ENCODE measurements at regions of chr3 and their contacts with region 1.

Region 1: DNA sequence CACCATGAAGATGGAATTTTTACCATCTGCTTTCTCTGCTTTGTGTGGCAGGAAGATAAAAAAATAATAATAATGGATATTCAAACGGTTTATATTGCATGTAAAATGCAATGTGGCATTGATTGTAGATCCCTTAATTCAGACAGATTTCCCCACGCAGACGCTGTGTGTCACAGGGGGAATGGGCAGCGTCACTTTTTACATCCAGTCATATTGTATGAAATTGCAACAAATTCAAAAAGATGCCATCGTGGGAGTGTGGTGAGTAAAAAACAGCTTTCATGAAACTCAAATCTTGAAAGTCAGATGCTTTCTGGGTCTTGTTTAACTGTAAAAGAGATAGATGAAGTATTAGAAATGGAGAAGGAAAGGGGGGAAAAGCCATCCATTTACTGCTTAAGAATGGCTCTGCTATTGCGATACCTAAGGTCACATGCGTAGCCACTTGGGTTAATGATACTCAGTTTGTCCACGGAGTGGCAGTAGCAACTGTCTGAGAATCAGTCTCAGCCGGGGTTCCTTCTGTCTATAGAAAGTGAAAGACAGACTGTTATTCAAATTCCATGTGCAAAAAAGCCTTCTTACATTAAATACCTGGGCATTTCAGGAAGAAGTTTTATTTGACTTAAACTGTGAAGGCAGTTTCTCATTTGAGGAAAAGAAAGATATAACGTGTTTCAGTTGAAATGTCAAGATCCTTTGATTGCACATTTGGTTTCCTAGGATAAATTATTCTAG is 28.5 kb downstream of the BTD start:
- DNase-seq: peak; percentile 89
- ATAC-seq: peak; percentile 80
- H3K4me3 ChIP-seq: peak overlapping the region; percentile 46; the same call in 1 of the 2 replicates
- H3K27ac ChIP-seq: peak overlapping the region; percentile 10; the same call in 1 of the 2 replicates
- H3K4me1 ChIP-seq: peaks cover 22% of the 10 kb centered on the region
- H3K27me3 ChIP-seq: no peaks in the 10 kb centered on the region
- CTCF ChIP-seq: peak; percentile 84
- POLR2A ChIP-seq: peak; percentile 39; the same call in 1 of the 2 replicates
- RAD21 ChIP-seq: peak; percentile 91

Region 2: DNA sequence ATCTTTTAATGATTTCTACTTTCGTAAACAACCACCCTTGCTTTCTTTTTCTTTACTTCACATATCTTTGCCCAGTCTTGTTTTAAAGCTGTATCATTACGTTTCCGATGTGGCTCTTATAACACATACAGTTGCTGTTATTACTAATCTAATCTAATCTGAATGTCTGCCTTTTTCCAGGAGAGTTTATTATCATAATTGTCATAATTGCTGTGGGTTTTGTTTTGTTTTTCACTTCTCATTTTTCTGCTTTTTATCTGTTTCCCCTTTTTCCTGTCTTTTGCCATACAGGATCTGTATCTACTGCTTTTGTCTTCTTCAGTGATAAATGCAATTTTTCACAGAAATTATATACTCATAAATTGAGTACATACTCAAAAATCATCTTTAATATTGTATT is 53.6 kb before region 1 on chr3:
- CTCF ChIA-PET with region 1: no interaction called
- POLR2A ChIA-PET with region 1: no interaction called
- dilution Hi-C with region 1: no loop called
- in situ Hi-C with region 1: no loop called
- intact Hi-C with region 1: no loop called
- DNase-seq: no peak
- ATAC-seq: no peak
- H3K4me3 ChIP-seq: no peak overlapping the region
- H3K27ac ChIP-seq: no peak overlapping the region
- H3K4me1 ChIP-seq: no peaks in the 10 kb centered on the region
- H3K27me3 ChIP-seq: no peaks in the 10 kb centered on the region
- CTCF ChIP-seq: no peak
- POLR2A ChIP-seq: no peak
- RAD21 ChIP-seq: no peak

Region 3: DNA sequence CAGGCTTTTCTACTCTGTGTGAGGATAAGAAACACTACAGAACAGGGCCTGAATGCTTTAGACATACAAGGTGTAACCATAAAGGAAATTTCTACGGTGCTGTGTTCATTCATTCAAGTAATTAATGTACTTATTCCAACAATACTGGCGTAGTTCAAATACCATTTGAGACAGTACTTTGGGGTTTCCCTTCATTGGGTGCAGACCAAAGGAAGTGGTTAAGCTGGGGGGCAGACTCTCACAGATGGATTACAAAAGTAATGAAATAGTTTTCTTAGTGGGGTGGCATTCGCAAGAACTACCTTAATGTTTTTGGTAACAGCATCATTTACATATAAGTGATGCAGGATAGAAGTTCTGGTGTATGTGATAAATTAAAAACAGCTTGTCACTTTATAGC is 37.5 kb after region 1 on chr3:
- CTCF ChIA-PET with region 1: interaction called, 3 read pairs
- POLR2A ChIA-PET with region 1: no interaction called
- dilution Hi-C with region 1: no loop called
- in situ Hi-C with region 1: no loop called
- intact Hi-C with region 1: loop called (anchors 2 kb)
- DNase-seq: no peak
- ATAC-seq: no peak
- H3K4me3 ChIP-seq: no peak overlapping the region
- H3K27ac ChIP-seq: no peak overlapping the region
- H3K4me1 ChIP-seq: no peaks in the 10 kb centered on the region
- H3K27me3 ChIP-seq: no peaks in the 10 kb centered on the region
- CTCF ChIP-seq: no peak
- POLR2A ChIP-seq: no peak
- RAD21 ChIP-seq: no peak

Region 4: GRCh38 chr3:15815696-15816095 is 185.7 kb after region 1 on chr3:
- CTCF ChIA-PET with region 1: interaction called, 8 read pairs
- POLR2A ChIA-PET with region 1: no interaction called
- dilution Hi-C with region 1: no loop called
- in situ Hi-C with region 1: no loop called
- intact Hi-C with region 1: loop called (anchors 1 kb)
- DNase-seq: peak; percentile 88
- ATAC-seq: peak; percentile 79
- H3K4me3 ChIP-seq: no peak overlapping the region
- H3K27ac ChIP-seq: peak overlapping the region; percentile 61; the same call in 1 of the 2 replicates
- H3K4me1 ChIP-seq: peaks cover 3% of the 10 kb centered on the region; the same call in 1 of the 2 replicates
- H3K27me3 ChIP-seq: no peaks in the 10 kb centered on the region
- CTCF ChIP-seq: peak; percentile 67
- POLR2A ChIP-seq: no peak
- RAD21 ChIP-seq: peak; percentile 75

Region 5: DNA sequence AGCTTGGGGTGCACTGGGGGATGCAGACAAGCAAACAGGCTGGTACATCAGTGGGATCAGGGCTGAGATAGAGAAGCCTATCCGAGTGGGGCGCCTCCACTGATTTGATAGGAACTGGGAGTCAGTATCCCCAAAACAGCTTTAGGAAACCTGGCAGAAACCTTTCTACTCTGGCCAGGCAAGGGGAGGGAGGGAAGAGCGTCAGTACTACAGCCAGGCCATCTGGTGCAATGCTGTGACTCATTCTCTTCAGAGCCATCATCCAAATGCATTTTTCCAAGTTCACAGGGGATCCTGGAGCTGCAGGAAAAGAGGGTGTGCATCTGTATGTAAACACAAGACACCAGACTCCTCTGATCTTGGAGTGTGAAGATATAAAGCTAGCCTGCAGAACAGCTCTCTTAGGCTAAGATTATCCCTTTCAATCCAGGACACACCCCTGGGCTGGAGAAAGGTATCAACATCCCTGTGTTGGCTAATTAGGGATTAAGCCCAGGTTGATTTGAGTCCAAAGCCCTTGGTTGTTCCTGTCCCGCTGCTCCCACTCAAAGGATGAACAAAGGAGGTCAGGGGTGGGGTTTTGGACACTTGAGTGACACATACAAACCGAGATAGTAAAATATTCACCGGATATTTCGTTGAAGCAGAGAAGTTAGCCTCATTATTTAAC is 553.7 kb after region 1 on chr3:
- CTCF ChIA-PET with region 1: no interaction called
- POLR2A ChIA-PET with region 1: no interaction called
- dilution Hi-C with region 1: no loop called
- in situ Hi-C with region 1: no loop called
- intact Hi-C with region 1: loop called (anchors 5 kb)
- DNase-seq: peak; percentile 98
- ATAC-seq: peak; percentile 90
- H3K4me3 ChIP-seq: no peak overlapping the region
- H3K27ac ChIP-seq: peak overlapping the region; percentile 60; the same call in 1 of the 2 replicates
- H3K4me1 ChIP-seq: peaks cover 35% of the 10 kb centered on the region
- H3K27me3 ChIP-seq: no peaks in the 10 kb centered on the region
- CTCF ChIP-seq: no peak
- POLR2A ChIP-seq: no peak
- RAD21 ChIP-seq: peak; percentile 25